ENCODE measurements at regions of chr1 and their contacts with region 1.

Region 1: GRCh38 chr1:110495926-110496600 is 22.9 kb downstream of the KCNA10 start:
- DNase-seq: peak; percentile 63
- H3K4me3 ChIP-seq: no peak overlapping the region
- H3K27ac ChIP-seq: no peak overlapping the region
- H3K27me3 ChIP-seq: peaks cover 22% of the 10 kb centered on the region
- CTCF ChIP-seq: peak; percentile 99

Region 2: DNA sequence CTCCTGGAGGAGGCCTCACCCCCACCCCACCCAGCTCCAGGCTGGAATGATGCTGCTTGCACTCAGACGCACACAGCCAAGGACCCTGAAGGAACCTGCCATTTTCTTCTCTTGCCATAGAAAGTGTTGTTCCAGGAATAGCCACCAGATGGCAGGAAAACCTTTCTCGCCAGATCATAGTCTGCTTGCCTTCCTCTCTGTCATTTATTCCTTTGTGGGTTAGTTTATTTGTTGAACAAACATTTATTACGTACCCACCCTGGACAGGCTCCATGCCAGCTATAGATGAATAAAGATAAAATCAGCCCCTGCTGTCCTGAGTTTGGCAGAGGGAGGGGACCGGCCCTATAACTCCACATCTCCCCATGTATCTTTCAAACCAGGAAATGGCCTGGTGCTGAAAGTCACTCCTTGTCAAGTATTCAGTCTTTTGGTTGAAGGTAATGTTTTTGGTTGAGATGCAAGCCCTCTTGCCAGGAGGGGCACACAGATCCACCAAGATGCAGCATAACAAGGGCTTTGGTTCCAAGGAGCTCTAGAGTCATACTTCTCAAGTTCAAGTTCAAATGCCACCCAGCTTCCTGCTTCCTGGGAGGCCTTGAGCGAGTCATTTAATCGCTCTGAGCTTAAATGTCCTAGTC is 292.9 kb before region 1 on chr1:
- CTCF ChIA-PET with region 1: interaction called, 134 read pairs
- POLR2A ChIA-PET with region 1: interaction called, 3 read pairs
- DNase-seq: peak; percentile 38
- H3K4me3 ChIP-seq: no peak overlapping the region
- H3K27ac ChIP-seq: no peak overlapping the region
- H3K27me3 ChIP-seq: peaks cover 3% of the 10 kb centered on the region
- CTCF ChIP-seq: peak; percentile 90

Region 3: GRCh38 chr1:110262846-110263631 is 233.0 kb before region 1 on chr1:
- CTCF ChIA-PET with region 1: no interaction called
- POLR2A ChIA-PET with region 1: no interaction called
- DNase-seq: no peak
- H3K4me3 ChIP-seq: no peak overlapping the region
- H3K27ac ChIP-seq: no peak overlapping the region
- H3K27me3 ChIP-seq: peaks cover 33% of the 10 kb centered on the region
- CTCF ChIP-seq: no peak

Region 4: DNA sequence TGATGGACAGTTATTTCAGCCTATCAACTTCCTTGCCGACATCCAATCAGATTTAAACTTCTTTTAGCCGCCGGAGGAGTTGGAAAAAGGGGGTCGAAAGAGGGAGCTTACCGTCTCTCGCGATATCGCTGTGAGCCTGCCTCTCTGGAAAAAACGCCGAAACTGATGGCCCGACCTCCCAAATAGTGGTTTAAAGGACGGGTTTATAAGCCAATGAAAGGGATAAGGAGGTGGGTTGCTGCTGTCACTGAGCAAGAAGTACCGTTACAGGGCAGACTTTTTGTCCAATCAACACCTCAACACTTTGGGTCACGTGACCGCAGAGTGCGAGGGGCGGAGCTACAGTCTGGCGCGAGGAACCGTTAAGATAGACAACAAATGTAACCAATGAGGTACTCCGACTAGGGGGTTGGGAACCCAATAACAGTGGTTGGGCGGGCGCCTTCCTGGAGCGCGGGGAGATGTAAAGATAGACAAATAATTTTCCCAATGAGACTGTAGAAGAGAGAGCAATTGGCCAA is 157.1 kb before region 1 on chr1 and contains the start of gene RBM15:
- CTCF ChIA-PET with region 1: interaction called, 22 read pairs
- POLR2A ChIA-PET with region 1: no interaction called
- DNase-seq: peak; percentile 100
- H3K4me3 ChIP-seq: peak within 1 kb of the TSS; percentile 98
- H3K27ac ChIP-seq: peak within 1 kb of the TSS; percentile 99
- H3K27me3 ChIP-seq: no peaks in the 10 kb centered on the region
- CTCF ChIP-seq: no peak
- polyA plus RNA-seq, gene RBM15: 8.9 and 9.6 TPM in 2 replicates

Region 5: DNA sequence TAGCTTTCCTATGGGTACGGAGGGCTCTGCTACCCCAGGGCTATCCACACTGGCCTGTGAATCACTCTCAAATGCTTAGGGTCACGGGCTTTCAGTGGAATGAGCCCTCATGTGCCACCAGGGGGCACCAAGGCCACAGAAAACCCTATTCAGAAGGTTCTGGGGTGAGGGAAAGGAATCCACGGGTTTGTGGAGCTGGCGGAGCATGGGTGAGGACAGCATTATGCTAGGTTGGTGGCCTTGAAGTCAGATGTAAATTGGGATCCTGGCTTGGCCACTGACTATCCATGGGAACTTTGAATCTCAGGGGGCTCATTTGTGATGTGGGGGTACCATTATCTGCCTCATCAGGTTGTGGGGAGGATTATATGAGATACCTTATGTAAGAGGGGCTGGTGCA is 83.5 kb before region 1 on chr1:
- CTCF ChIA-PET with region 1: interaction called, 265 read pairs
- POLR2A ChIA-PET with region 1: no interaction called
- DNase-seq: no peak
- H3K4me3 ChIP-seq: no peak overlapping the region
- H3K27ac ChIP-seq: no peak overlapping the region
- H3K27me3 ChIP-seq: peaks cover 6% of the 10 kb centered on the region
- CTCF ChIP-seq: peak; percentile 82

Region 6: GRCh38 chr1:110471163-110471562 is 24.9 kb before region 1 on chr1:
- CTCF ChIA-PET with region 1: interaction called, 281 read pairs
- POLR2A ChIA-PET with region 1: no interaction called
- DNase-seq: no peak
- H3K4me3 ChIP-seq: no peak overlapping the region
- H3K27ac ChIP-seq: no peak overlapping the region
- H3K27me3 ChIP-seq: peaks cover 2% of the 10 kb centered on the region
- CTCF ChIP-seq: no peak

Region 7: DNA sequence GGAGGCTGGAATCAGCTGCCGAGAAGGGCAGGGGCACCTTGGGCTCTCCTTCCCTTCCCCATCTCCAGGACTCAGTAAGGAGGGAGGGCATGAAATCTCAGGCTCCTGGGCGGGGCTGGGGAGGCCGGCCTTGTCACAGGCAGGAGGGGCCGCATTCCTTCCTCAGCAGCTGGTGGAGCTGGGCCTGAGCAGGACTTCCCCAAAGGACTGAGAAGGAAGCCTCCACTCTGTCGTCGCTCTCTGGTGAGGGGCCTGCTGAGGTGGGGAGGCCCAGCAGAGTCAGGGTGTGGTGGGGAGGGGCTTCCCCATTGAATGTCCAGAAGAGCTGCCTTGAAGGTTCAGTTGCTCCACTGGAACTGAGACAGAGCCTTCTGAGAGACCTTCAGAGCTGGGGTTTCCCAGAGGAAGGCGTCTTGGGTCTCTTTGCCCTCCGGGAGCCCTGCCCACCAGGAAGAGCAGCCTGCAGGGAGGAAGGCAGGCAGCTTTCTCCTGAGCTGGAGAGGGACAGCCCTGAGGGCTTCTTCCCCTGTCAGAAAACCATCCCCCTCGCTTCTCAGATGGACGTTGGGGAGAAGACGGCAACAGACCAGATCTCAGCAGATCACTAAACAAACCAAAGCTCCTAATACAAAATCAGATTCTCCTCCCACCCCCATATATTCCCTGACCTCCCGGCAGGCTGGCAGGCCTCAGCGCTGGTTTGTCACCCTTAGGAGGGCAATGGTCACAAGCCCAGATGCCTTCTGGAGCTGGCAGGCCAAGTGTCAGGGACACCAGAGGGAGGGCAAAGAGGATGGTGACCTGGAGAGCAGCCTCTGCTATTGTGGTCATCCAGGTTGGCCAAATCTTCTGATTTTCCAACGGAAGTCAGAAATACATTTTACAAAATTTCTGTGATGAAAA is 12.2 kb after region 1 on chr1:
- CTCF ChIA-PET with region 1: interaction called, 22 read pairs
- POLR2A ChIA-PET with region 1: interaction called, 3 read pairs
- DNase-seq: no peak
- H3K4me3 ChIP-seq: no peak overlapping the region
- H3K27ac ChIP-seq: no peak overlapping the region
- H3K27me3 ChIP-seq: peaks cover 18% of the 10 kb centered on the region
- CTCF ChIP-seq: no peak

Measured in AG04450 (cell line).